Heart left ventricle (tissue), 16 donors: ENCODE measurements at regions of chr7 and their contacts with region 1.

Region 1: GRCh38 chr7:74289018-74289658 is at the start of gene CLIP2:
- DNase-seq: peak; percentile 82 to 91 (median 87)
- ATAC-seq: peak; percentile 78 to 93 (median 90)
- H3K4me3 ChIP-seq: peak within 1 kb of the TSS; percentile 60 to 98 (median 81)
- H3K27ac ChIP-seq: peak within 1 kb of the TSS in 11 of 12 donors; percentile 59 to 92 (median 75)
- H3K4me1 ChIP-seq: peaks cover 0 to 51% (median 28%) of the 10 kb centered on the region in 12 donors
- H3K27me3 ChIP-seq: no peaks in the 10 kb centered on the region
- CTCF ChIP-seq: peak in 1 of 12 donors; percentile 3
- POLR2A ChIP-seq: peak in 1 of 2 donors; percentile 39
- total RNA-seq, gene CLIP2: 4.2 to 17.7 (median 9.0) TPM

Region 2: GRCh38 chr7:74254129-74254857 is 34.8 kb before region 1 on chr7 and contains the start of gene RFC2:
- intact Hi-C with region 1: loop called in 6 of 10 experiments (anchors 5 kb)
- DNase-seq: peak; percentile 97 to 99 (median 98)
- ATAC-seq: peak; percentile 98 to 100 (median 100)
- H3K4me3 ChIP-seq: peak within 1 kb of the TSS; percentile 64 to 98 (median 81)
- H3K27ac ChIP-seq: peak within 1 kb of the TSS; percentile 80 to 99 (median 95)
- H3K4me1 ChIP-seq: peaks cover 0 to 38% (median 24%) of the 10 kb centered on the region in 12 donors
- H3K27me3 ChIP-seq: no peaks in the 10 kb centered on the region
- CTCF ChIP-seq: peak in 11 of 12 donors; percentile 9 to 47 (median 27)
- POLR2A ChIP-seq: peak in 1 of 2 donors; percentile 64
- total RNA-seq, gene RFC2: 7.8 to 20.9 (median 12.2) TPM

Region 3: DNA sequence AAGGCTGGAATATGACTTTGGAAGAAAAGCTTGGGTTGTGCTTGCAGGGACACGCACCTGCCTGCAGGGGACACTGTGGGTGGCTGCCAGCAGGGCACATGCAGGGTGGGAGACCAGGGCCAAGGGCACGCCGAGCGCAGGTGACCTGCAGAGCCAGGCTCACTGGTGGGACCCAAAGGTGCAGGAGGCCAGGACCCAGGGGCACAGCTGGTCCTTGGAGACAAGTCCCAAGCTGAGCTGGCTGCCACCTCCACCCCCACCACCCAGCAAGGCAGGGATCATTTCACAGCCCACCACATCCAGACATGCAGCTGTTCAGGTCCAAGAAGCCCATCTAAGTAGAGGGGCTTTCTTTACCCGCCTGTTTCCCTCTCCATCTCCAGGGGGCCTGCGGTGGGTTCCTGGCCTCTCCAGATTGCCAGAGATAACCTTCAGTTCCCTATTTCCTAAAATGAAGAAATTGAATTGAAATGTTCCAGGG is 13.7 kb before region 1 on chr7:
- intact Hi-C with region 1: loop called in 1 of 10 experiments (anchors 1 kb)
- DNase-seq: no peak
- ATAC-seq: no peak
- H3K4me3 ChIP-seq: no peak overlapping the region
- H3K27ac ChIP-seq: peak overlapping the region in 1 of 12 donors; percentile 24
- H3K4me1 ChIP-seq: peaks cover 0 to 41% (median 24%) of the 10 kb centered on the region in 12 donors
- H3K27me3 ChIP-seq: no peaks in the 10 kb centered on the region
- CTCF ChIP-seq: peak; percentile 11 to 52 (median 36)
- POLR2A ChIP-seq: no peak

Region 4: DNA sequence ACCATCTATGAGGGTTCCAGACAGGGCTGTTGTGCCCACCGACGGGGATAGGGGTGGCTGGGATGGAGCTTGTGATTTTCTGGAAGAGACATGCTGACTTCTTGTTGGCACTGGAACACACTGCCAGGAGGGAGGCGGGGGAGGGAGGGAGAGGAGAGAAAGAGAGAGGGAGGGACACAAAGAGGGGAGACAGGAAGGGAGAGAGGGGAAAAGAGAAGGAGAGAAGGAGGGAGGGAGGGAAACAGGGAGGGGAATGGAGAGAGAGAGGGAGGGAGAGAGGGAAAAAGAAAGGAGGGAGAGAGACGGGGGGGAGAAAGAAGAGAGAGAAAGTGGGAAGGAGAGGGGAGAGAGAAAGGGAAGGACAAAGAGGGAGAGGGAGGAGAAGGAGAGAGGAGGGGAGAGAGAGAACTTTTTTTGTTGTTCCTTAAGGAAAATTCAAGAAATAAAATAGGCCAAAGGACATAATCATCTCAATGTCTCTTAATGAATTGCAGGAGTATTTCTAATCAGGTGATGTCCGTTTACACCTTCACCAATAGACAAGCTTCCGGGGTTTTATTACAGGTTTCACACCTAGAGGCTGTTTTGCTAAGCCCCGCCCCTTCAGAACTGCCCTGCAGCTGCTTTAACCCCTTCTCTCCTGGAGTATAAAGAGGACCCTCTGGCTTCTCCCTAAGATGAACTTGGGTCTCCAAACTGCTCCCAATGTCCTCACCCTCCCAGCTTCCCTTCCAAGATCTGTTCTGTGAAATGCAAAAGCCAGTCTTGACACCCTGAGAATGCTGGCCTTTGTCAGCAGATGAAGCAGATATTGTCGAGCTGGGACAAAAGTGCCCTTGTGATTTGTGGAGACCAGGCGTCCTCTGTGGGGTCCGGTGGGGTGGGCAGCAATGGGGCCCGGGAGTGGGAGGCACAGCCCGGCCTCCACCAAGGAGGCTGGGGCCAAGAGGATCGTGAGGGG is 82.5 kb after region 1 on chr7:
- intact Hi-C with region 1: loop called in 3 of 10 experiments (anchors 5 to 10 kb)
- DNase-seq: peak in 1 of 5 donors; percentile 12
- ATAC-seq: no peak
- H3K4me3 ChIP-seq: no peak overlapping the region
- H3K27ac ChIP-seq: peak overlapping the region in 3 of 12 donors; percentile 5 to 81 (median 27)
- H3K4me1 ChIP-seq: peaks cover 0 to 23% (median 4%) of the 10 kb centered on the region in 12 donors
- H3K27me3 ChIP-seq: no peaks in the 10 kb centered on the region
- CTCF ChIP-seq: no peak
- POLR2A ChIP-seq: no peak

Region 5: DNA sequence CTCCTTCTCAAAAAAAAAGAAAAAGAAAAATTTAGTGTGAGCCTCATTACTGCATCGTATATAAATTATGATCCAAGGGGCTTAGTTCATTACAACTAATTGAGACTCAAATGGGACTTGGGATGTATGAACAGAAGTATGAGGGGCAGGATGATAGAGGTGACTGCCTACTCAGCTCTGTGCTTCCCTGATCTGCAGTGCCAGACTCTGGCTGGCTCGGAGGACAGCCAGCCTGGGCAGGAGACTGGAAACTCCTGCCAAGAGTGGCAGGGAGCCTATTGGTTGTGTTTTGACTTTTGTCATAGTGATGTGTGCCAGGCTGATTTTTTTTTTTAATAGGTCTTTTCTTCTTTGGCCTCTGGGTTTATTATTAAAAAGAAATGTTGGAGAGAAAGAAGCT is 90.8 kb after region 1 on chr7:
- intact Hi-C with region 1: loop called in 2 of 10 experiments (anchors 5 to 10 kb)
- DNase-seq: peak in 3 of 5 donors; percentile 35 to 71 (median 59)
- ATAC-seq: peak; percentile 90 to 97 (median 94)
- H3K4me3 ChIP-seq: no peak overlapping the region
- H3K27ac ChIP-seq: peak overlapping the region in 1 of 12 donors; percentile 36
- H3K4me1 ChIP-seq: peaks cover 0 to 4% (median 0%) of the 10 kb centered on the region in 12 donors
- H3K27me3 ChIP-seq: no peaks in the 10 kb centered on the region
- CTCF ChIP-seq: no peak
- POLR2A ChIP-seq: no peak

Region 6: GRCh38 chr7:74401137-74401859 is 112.2 kb after region 1 on chr7:
- intact Hi-C with region 1: loop called in 2 of 10 experiments (anchors 5 to 10 kb)
- DNase-seq: peak; percentile 47 to 72 (median 59)
- ATAC-seq: peak in 3 of 4 donors; percentile 58 to 65 (median 62)
- H3K4me3 ChIP-seq: no peak overlapping the region
- H3K27ac ChIP-seq: no peak overlapping the region
- H3K4me1 ChIP-seq: no peaks in the 10 kb centered on the region
- H3K27me3 ChIP-seq: no peaks in the 10 kb centered on the region
- CTCF ChIP-seq: peak; percentile 91 to 98 (median 96)
- POLR2A ChIP-seq: no peak